Activated naive CD4-positive, alpha-beta T cell treated with anti-CD3 and anti-CD28 coated beads for 36 hours (primary cell): ENCODE measurements at regions of chr3 and their contacts with region 1.

Region 1: GRCh38 chr3:4712143-4712542 is 219.0 kb downstream of the ITPR1 start:
- DNase-seq: no peak
- H3K4me3 Mint-ChIP-seq: no peak overlapping the region
- H3K27ac Mint-ChIP-seq: no peak overlapping the region
- H3K4me1 Mint-ChIP-seq: peaks cover 2% of the 10 kb centered on the region
- H3K27me3 Mint-ChIP-seq: no peaks in the 10 kb centered on the region

Region 2: GRCh38 chr3:4826237-4827100 is 114.3 kb after region 1 on chr3:
- CTCF ChIA-PET with region 1: interaction called, 17 read pairs
- intact Hi-C with region 1: no loop called
- DNase-seq: no peak
- H3K4me3 Mint-ChIP-seq: no peak overlapping the region
- H3K27ac Mint-ChIP-seq: peak overlapping the region; percentile 57
- H3K4me1 Mint-ChIP-seq: peaks cover 93% of the 10 kb centered on the region
- H3K27me3 Mint-ChIP-seq: no peaks in the 10 kb centered on the region

Region 3: DNA sequence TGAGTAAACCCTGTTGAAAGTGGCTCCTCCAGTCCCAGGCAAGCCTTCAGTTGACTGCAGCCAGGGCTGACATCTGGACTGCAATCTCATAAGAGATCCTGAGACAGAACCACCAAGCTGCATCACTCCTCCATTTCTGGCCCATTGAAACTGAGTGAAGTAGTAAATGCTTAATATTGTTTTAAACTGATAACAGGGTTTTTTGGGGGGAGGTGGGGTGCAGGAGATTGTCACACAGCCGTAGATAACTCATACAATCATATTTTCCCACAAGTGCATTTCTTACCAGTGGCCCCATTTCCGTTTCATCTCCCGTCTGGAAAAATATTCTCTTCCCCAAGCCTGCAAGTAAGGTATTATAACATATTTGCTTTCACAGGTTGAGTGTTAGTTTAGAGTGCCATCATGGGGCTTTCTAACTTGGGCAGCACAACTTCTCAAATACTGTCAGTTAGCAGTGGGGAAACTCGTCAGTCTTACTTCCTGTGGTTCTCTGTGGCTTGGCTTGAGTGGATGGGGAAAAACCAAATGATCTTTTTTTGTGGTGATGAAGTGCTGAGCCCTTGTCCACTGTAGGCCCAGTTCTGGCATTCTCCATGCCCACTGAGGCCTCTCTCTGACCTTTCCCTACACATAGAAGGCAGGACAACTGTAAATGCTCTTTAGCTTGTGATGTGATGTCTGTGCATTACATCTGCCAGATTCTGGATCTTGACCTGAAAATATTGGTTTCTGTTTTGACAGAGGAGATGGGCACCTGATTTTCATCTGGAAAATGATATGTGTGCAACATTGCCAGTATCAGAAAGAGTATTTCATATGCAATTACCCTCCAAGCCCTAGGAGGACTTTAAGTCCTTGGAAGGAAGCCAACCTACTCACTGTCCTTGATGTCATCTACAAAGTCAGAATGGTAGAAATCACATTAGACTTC is 177.0 kb after region 1 on chr3:
- CTCF ChIA-PET with region 1: interaction called, 9 read pairs
- intact Hi-C with region 1: loop called (anchors 1 kb)
- DNase-seq: peak; percentile 61
- H3K4me3 Mint-ChIP-seq: no peak overlapping the region
- H3K27ac Mint-ChIP-seq: peak overlapping the region; percentile 85
- H3K4me1 Mint-ChIP-seq: peaks cover 40% of the 10 kb centered on the region
- H3K27me3 Mint-ChIP-seq: no peaks in the 10 kb centered on the region

Region 4: DNA sequence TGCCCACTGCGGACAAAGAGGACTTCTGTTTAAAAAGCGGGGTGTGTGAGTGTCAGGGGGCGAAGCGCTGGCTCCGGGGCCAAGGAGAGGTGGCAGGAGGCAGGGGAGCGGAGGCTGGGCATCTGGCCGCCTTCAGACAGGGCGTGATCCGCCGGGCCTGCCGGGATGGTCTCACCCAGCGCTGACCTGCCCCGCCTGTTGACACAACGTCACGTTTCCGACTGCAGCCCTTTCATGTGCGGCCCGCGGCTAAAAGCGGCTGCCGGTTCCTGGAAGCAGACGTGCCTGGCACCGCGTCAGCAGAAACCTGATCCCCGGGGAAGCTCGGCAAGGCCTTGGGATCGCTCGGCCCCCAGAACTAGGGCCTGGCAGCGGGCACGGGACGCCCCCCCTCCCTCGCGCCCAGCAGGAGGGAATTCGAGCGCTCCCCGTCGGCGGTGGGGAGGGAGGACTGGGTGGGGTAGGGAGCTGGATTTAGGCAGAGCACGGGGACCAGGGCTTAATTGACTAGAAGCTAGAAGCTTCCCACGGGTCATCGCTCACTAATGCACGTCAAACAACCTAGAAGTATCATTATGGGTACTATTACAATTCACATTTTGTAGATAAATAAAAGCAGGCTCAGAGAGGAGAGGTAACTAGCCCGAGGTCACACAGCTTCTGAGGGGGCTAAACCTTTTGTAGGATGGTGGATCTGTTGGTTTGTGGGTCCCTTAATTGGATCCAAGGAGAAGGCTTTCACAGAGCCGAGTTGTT is 274.8 kb after region 1 on chr3:
- CTCF ChIA-PET with region 1: interaction called, 11 read pairs
- intact Hi-C with region 1: no loop called
- DNase-seq: peak; percentile 80
- H3K4me3 Mint-ChIP-seq: peak overlapping the region; percentile 71
- H3K27ac Mint-ChIP-seq: peak overlapping the region; percentile 65
- H3K4me1 Mint-ChIP-seq: peaks cover 55% of the 10 kb centered on the region
- H3K27me3 Mint-ChIP-seq: no peaks in the 10 kb centered on the region

Region 5: GRCh38 chr3:5057857-5058324 is 345.7 kb after region 1 on chr3:
- CTCF ChIA-PET with region 1: interaction called, 165 read pairs
- intact Hi-C with region 1: loop called (anchors 1 kb)
- DNase-seq: peak; percentile 91
- H3K4me3 Mint-ChIP-seq: no peak overlapping the region
- H3K27ac Mint-ChIP-seq: no peak overlapping the region
- H3K4me1 Mint-ChIP-seq: peaks cover 5% of the 10 kb centered on the region
- H3K27me3 Mint-ChIP-seq: no peaks in the 10 kb centered on the region

Region 6: DNA sequence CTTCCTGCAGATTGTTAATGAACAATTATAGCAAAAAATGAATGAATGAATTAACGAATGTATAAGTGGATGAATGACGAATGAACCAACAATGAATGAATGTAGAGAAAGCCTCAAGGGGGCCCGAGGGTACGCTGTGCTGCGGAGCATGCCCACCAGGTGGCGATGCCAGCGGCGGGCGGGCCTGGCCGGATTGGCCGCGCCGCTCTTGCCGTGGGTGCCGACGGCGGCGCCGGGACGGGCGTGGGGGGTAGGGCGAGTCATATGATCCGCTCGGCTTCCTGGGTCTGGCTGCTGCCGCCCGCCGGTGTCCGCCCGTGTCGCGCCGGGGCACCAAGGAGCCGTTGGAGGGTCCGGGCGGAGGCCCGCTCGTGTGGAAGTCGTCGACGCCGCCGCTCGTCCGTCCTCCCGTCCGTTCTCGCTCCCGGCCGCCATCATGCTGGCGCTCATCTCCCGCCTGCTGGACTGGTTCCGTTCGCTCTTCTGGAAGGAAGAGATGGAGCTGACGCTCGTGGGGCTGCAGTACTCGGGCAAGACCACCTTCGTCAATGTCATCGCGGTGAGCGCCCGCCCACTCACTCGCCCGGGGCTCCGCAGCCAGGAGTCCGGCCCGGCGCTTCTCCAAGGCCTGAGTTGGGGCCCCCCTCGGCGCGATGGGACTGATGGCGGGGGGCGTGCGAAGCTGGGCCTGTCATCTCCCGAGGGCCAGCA is 410.0 kb after region 1 on chr3 and contains the start of gene ARL8B:
- CTCF ChIA-PET with region 1: interaction called, 6 read pairs
- intact Hi-C with region 1: loop called (anchors 1 kb)
- DNase-seq: peak; percentile 94
- H3K4me3 Mint-ChIP-seq: peak within 1 kb of the TSS; percentile 90
- H3K27ac Mint-ChIP-seq: peak within 1 kb of the TSS; percentile 90
- H3K4me1 Mint-ChIP-seq: peaks cover 39% of the 10 kb centered on the region
- H3K27me3 Mint-ChIP-seq: no peaks in the 10 kb centered on the region
- total RNA-seq, gene ARL8B: 38.4 to 39.3 TPM